Activated CD4-positive, alpha-beta T cell treated with anti-CD3 and anti-CD28 coated beads for 36 hours (primary cell): ENCODE measurements at regions of chrX and their contacts with region 1.

Region 1: DNA sequence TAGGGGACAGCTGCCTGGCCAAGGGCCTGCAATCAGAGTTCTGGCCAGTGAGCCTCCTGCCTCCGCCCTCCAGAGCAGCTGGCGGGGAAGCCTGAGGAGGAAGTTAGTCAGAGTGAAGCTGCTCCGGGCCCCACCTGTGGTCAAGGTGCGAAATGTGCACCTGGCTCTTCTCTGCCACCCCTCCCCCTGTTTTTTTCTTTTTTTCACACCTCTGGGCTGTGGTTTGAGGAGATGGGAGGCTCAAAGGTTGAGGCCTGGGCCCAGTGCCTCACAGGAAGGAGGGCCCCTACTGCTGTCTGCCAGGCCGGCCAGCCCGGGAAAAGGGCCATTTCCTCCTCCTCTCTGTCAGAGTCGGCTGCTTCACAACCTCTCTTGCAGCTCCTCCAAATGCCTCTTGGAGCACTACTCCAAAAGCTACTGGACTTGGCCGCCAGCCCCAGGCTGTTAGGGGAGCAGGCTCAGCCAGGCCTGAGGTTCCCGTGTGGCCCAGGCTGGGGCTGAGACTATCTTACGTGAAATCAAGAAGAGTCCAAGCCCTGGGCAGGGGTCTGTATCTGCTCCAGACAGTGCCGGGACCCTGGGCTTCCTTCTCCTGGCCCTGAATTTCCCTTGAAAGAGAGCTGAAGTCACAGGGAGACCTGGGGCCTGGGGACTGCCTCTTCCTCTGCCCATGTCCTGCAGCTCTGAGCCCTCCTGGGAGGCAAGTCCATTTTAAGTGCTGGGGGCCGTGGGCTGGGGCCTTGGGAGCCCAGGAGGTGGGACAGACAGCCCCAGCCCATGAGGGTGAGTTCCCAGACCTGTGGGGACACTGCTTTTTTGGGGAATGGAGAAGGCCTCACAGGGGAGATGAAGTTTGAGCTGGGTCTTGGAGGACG is 4.5 kb upstream of the CXCR3 start:
- DNase-seq: peak; percentile 83
- ATAC-seq: peak; percentile 53
- H3K4me3 Mint-ChIP-seq: peak overlapping the region; percentile 49
- H3K27ac Mint-ChIP-seq: peak overlapping the region; percentile 94
- H3K4me1 Mint-ChIP-seq: peaks cover 56% of the 10 kb centered on the region
- H3K27me3 Mint-ChIP-seq: no peaks in the 10 kb centered on the region

Region 2: DNA sequence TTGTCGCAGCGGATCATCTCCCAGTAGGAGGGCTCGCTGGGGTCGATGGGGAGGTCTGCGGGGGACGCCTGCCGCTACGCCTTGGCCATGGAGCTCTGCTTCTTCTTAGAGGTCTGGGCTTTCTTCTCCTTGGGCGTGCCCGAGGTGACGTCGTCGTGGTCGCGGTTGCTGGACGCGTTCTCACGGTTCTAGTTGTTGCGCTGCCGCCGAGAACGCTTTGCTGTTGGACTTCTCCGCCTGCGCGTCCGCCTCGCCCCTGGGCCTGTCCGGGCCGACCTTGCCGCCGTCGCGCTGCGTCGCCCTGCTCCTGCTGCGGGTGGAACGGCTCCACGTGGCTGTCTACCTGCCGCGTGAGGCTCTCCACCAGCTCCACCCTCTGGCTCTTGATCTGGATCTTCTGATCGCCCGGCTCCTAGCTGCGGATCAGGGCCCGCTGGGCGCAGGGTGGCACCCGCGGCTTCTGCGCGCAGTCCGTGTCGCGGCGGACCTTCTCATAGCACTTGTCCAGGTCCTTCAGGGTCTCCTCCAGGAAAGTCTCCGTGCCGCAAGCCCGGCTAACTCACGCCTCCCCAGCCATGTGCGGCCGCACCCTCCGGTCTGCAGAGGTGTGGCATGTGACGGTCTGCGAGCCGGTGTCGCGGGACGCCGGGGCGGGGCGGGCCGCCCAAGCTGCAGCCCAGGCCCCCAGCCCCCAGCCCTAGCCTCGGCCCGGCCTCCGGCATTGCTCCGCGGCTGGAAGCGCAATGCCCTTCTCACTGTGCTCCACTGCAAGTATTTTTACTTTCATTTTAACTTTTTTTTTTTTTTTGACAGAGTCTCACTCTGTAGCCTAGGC is 130.4 kb before region 1 on chrX:
- CTCF ChIA-PET with region 1: no interaction called
- POLR2A ChIA-PET with region 1: no interaction called
- intact Hi-C with region 1: no loop called
- DNase-seq: peak; percentile 61
- ATAC-seq: peak; percentile 78
- H3K4me3 Mint-ChIP-seq: peak overlapping the region; percentile 76
- H3K27ac Mint-ChIP-seq: peak overlapping the region; percentile 67
- H3K4me1 Mint-ChIP-seq: peaks cover 14% of the 10 kb centered on the region
- H3K27me3 Mint-ChIP-seq: no peaks in the 10 kb centered on the region

Region 3: GRCh38 chrX:71532753-71533425 is 89.9 kb before region 1 on chrX and contains the start of gene OGT:
- CTCF ChIA-PET with region 1: interaction called, 5 read pairs
- POLR2A ChIA-PET with region 1: interaction called, 43 read pairs
- intact Hi-C with region 1: loop called (anchors 1 to 2 kb)
- DNase-seq: peak; percentile 96
- ATAC-seq: peak; percentile 76
- H3K4me3 Mint-ChIP-seq: peak within 1 kb of the TSS; percentile 96
- H3K27ac Mint-ChIP-seq: peak within 1 kb of the TSS; percentile 98
- H3K4me1 Mint-ChIP-seq: peaks cover 26% of the 10 kb centered on the region
- H3K27me3 Mint-ChIP-seq: no peaks in the 10 kb centered on the region
- total RNA-seq, gene OGT: 331 to 339 TPM

Region 4: GRCh38 chrX:71603618-71604017 is 19.2 kb before region 1 on chrX:
- CTCF ChIA-PET with region 1: interaction called, 8 read pairs
- POLR2A ChIA-PET with region 1: interaction called, 13 read pairs
- intact Hi-C with region 1: loop called in 1 of 2 experiments (anchors 2 kb)
- DNase-seq: peak; percentile 34
- ATAC-seq: no peak
- H3K4me3 Mint-ChIP-seq: peak overlapping the region; percentile 49
- H3K27ac Mint-ChIP-seq: peak overlapping the region; percentile 93
- H3K4me1 Mint-ChIP-seq: peaks cover 46% of the 10 kb centered on the region
- H3K27me3 Mint-ChIP-seq: no peaks in the 10 kb centered on the region

Region 5: GRCh38 chrX:71652405-71652804 is 29.6 kb after region 1 on chrX:
- CTCF ChIA-PET with region 1: no interaction called
- POLR2A ChIA-PET with region 1: no interaction called
- intact Hi-C with region 1: loop called (anchors 2 kb)
- DNase-seq: peak; percentile 73
- ATAC-seq: peak; percentile 68
- H3K4me3 Mint-ChIP-seq: no peak overlapping the region
- H3K27ac Mint-ChIP-seq: no peak overlapping the region
- H3K4me1 Mint-ChIP-seq: peaks cover 11% of the 10 kb centered on the region
- H3K27me3 Mint-ChIP-seq: no peaks in the 10 kb centered on the region

Region 6: DNA sequence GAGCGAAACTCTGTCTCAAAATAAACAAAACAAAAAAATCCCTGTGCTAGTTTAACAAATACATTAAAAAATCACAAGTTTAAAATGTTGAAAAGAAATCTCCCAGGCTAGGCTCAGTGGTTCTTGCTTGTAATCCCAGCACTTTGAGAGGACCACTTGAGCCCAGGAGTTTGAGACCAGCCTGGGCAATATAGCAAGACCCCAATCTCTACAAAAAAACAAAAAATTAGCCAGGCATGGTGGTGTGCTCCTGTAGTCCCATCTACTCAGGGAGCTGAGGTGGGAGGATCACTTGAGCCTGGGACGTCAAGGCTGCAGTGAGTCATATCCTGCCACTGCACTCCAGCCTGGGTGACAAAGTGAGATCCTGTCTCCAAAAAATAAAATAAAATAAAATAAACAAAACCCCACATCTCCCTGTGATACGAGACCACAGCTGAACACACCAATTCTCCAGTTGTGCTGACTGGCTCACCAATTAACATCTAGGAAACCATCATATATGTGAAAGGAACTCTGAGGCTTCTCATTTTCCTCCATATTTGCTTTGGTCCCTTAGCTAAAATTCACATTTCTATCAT is 646.9 kb after region 1 on chrX:
- CTCF ChIA-PET with region 1: no interaction called
- POLR2A ChIA-PET with region 1: no interaction called
- intact Hi-C with region 1: loop called in 1 of 2 experiments (anchors 5 kb)
- DNase-seq: peak; percentile 61
- ATAC-seq: peak; percentile 76
- H3K4me3 Mint-ChIP-seq: no peak overlapping the region
- H3K27ac Mint-ChIP-seq: peak overlapping the region; percentile 88
- H3K4me1 Mint-ChIP-seq: peaks cover 46% of the 10 kb centered on the region
- H3K27me3 Mint-ChIP-seq: no peaks in the 10 kb centered on the region